MCF 10A (cell line): ENCODE measurements at regions of chr11 and their contacts with region 1.

Region 1: GRCh38 chr11:29159552-29160465 is 857.0 kb downstream of the KCNA4 start:
- DNase-seq: peak; percentile 80
- H3K4me3 Mint-ChIP-seq: no peak overlapping the region
- H3K27ac Mint-ChIP-seq: no peak overlapping the region
- H3K4me1 Mint-ChIP-seq: peaks cover 11% of the 10 kb centered on the region
- H3K27me3 Mint-ChIP-seq: no peaks in the 10 kb centered on the region
- CTCF ChIP-seq: peak; percentile 77

Region 2: DNA sequence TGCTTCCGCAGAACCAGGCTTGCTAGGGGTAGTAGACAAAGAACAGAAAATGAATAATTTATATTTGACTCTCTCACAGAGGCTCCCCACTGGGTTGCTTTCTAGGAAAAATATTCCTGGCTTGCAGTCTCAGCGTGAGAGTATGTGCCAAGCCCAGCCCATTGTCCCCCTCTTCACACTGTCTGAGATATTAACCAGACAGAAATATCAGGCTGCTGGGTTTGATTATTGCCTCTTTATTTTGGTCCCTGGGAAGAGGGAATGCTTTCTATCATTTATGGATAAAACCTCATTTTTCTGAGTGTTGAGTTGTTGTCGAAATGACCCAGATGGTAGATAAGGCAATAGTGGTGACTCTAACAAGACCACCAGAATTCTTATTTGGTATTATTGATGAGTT is 683.8 kb before region 1 on chr11:
- CTCF ChIA-PET with region 1: no interaction called
- POLR2A ChIA-PET with region 1: no interaction called
- intact Hi-C with region 1: no loop called
- DNase-seq: no peak
- H3K4me3 Mint-ChIP-seq: no peak overlapping the region
- H3K27ac Mint-ChIP-seq: no peak overlapping the region
- H3K4me1 Mint-ChIP-seq: no peaks in the 10 kb centered on the region
- H3K27me3 Mint-ChIP-seq: no peaks in the 10 kb centered on the region
- CTCF ChIP-seq: no peak

Region 3: GRCh38 chr11:28697920-28698827 is 461.6 kb before region 1 on chr11:
- CTCF ChIA-PET with region 1: interaction called, 12 read pairs
- POLR2A ChIA-PET with region 1: no interaction called
- intact Hi-C with region 1: loop called (anchors 1 kb)
- DNase-seq: peak; percentile 79
- H3K4me3 Mint-ChIP-seq: no peak overlapping the region
- H3K27ac Mint-ChIP-seq: peak overlapping the region; percentile 36
- H3K4me1 Mint-ChIP-seq: peaks cover 41% of the 10 kb centered on the region
- H3K27me3 Mint-ChIP-seq: no peaks in the 10 kb centered on the region
- CTCF ChIP-seq: peak; percentile 76

Region 4: GRCh38 chr11:28834877-28835276 is 324.9 kb before region 1 on chr11:
- CTCF ChIA-PET with region 1: no interaction called
- POLR2A ChIA-PET with region 1: no interaction called
- intact Hi-C with region 1: loop called (anchors 2 kb)
- DNase-seq: peak; percentile 68
- H3K4me3 Mint-ChIP-seq: no peak overlapping the region
- H3K27ac Mint-ChIP-seq: peak overlapping the region; percentile 70
- H3K4me1 Mint-ChIP-seq: peaks cover 41% of the 10 kb centered on the region
- H3K27me3 Mint-ChIP-seq: no peaks in the 10 kb centered on the region
- CTCF ChIP-seq: no peak

Region 5: GRCh38 chr11:29019960-29020683 is 139.7 kb before region 1 on chr11:
- CTCF ChIA-PET with region 1: interaction called, 7 read pairs
- POLR2A ChIA-PET with region 1: no interaction called
- intact Hi-C with region 1: loop called (anchors 5 kb)
- DNase-seq: peak; percentile 52
- H3K4me3 Mint-ChIP-seq: no peak overlapping the region
- H3K27ac Mint-ChIP-seq: no peak overlapping the region
- H3K4me1 Mint-ChIP-seq: peaks cover 11% of the 10 kb centered on the region
- H3K27me3 Mint-ChIP-seq: no peaks in the 10 kb centered on the region
- CTCF ChIP-seq: peak; percentile 18

Region 6: GRCh38 chr11:29051935-29052334 is 107.9 kb before region 1 on chr11:
- CTCF ChIA-PET with region 1: no interaction called
- POLR2A ChIA-PET with region 1: no interaction called
- intact Hi-C with region 1: no loop called
- DNase-seq: peak; percentile 20
- H3K4me3 Mint-ChIP-seq: no peak overlapping the region
- H3K27ac Mint-ChIP-seq: no peak overlapping the region
- H3K4me1 Mint-ChIP-seq: peaks cover 5% of the 10 kb centered on the region
- H3K27me3 Mint-ChIP-seq: no peaks in the 10 kb centered on the region
- CTCF ChIP-seq: no peak